Calu3 (cell line): ENCODE measurements at regions of chr22 and their contacts with region 1.

Region 1: DNA sequence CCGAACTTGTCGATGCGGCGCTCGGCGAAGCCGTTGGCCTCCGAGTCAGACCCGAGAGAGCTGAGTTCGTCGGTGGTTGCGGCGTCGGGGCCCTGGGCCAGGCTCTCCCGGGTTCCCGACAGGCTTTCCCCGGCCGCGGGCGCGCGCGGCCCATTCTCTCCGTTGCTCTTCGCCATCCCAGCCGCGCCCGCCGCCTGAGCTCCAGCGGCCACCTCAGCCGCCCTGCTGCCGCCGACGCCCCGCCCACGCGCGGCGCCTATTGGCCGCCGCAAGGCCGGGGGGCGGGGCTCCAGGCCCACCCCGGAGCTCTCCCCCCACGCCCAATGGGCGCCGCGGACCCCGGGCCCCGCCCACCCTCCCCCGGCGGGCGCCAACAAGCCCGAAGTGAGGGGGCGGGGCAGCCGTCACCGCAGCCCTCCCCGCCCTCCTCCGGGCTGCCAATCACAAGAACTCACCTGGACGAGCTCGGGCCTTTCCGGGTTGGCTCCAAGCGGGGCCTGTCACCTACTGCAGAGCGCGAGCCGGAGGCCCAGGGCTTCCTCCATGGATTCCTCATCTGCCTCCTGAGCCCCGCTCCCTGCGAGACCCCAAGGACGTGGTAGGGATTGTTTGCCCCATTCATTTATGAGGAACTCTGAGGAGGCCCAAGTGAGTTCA is at the start of gene TBC1D10A:
- DNase-seq: peak; percentile 97
- H3K4me3 Mint-ChIP-seq: peak within 1 kb of the TSS; percentile 78
- H3K27ac Mint-ChIP-seq: peak within 1 kb of the TSS; percentile 59
- H3K4me1 Mint-ChIP-seq: peaks cover 38% of the 10 kb centered on the region
- H3K27me3 Mint-ChIP-seq: no peaks in the 10 kb centered on the region
- CTCF ChIP-seq: no peak
- total RNA-seq, gene TBC1D10A: 24.5 and 24.8 TPM in 2 replicates

Region 2: DNA sequence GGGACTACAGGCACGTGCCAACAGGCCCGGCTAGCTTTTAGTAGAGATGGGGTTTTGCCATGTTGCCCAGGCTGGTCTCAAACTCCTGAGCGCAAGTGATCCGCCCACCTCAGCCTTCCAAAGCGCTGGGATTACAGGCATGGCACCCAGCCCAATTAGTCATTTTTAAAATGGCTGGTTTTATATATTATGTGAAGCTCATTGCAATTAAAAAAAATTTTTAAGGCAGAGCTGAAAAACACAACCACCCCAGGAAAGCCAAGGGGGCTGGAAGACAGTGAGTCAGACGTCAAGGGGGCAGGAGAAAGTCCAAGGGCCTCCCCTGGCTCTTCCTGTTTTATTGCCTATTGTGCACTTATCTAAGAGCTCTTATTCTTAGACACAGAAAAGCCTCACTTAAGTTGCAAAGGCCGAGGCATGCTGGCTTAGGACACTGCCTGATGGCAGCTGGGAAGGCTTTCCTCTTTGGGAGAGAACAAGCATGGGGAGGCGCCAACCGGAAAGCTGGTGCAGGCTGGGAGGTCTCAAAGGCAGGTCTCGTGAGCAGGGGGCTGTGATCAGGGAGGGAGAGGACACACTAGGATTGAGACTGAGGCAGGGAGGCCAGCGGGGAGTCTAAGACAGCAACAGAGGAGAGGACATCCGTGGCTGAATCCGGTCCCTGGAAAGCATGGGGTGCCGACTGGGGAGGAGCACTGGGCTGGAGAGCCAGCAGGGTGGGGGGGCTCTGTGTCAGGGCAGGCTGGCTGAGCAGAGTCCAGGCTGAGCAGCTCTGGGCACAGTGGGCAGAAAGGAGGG is 49.1 kb before region 1 on chr22:
- CTCF ChIA-PET with region 1: interaction called, 3 read pairs
- intact Hi-C with region 1: loop called (anchors 10 kb)
- DNase-seq: no peak
- H3K4me3 Mint-ChIP-seq: no peak overlapping the region
- H3K27ac Mint-ChIP-seq: peak overlapping the region; percentile 12
- H3K4me1 Mint-ChIP-seq: peaks cover 9% of the 10 kb centered on the region
- H3K27me3 Mint-ChIP-seq: no peaks in the 10 kb centered on the region
- CTCF ChIP-seq: no peak

Region 3: DNA sequence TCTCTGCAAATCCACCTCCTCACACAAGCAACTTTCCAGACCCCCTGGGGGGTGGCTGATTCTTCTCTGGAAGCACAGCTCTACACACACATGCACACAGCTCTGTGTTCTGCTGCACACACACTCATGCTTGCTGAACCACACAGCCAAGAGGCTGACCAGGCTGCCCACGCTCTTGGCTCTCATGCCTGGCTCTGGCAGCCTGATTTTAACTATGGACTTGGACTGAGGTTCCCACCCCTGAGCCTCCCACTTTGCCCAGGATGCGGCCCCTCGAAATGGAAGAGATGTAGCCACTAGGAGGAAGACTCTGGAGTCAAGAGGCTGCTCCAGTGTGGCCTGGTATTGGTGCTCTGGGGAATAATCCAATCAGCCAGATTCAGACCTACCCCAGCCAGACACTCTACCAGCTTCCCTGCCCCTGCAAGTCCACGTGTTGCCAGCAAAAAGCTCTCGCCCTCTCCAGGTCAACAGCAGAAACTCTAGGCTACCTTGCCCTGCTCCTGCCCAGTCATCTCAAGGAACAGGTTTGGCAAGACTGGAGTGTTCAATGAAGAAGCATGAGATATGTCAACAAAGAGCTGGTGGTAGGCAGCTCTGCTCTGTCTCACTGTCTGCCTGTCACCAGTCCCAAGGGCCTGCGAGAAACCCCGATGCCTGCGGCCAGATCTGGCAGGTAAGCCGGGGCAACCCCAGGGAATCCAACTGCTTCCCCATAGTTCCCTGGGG is 28.7 kb before region 1 on chr22:
- CTCF ChIA-PET with region 1: interaction called, 15 read pairs
- intact Hi-C with region 1: no loop called
- DNase-seq: peak; percentile 81
- H3K4me3 Mint-ChIP-seq: peak overlapping the region; percentile 31
- H3K27ac Mint-ChIP-seq: peak overlapping the region; percentile 36
- H3K4me1 Mint-ChIP-seq: peaks cover 45% of the 10 kb centered on the region
- H3K27me3 Mint-ChIP-seq: no peaks in the 10 kb centered on the region
- CTCF ChIP-seq: no peak